ENCODE measurements at regions of chr14 and their contacts with region 1.

Region 1: GRCh38 chr14:76647697-76648298 is 113.5 kb upstream of the VASH1 start:
- DNase-seq: no peak
- ATAC-seq: peak; percentile 60

Region 2: DNA sequence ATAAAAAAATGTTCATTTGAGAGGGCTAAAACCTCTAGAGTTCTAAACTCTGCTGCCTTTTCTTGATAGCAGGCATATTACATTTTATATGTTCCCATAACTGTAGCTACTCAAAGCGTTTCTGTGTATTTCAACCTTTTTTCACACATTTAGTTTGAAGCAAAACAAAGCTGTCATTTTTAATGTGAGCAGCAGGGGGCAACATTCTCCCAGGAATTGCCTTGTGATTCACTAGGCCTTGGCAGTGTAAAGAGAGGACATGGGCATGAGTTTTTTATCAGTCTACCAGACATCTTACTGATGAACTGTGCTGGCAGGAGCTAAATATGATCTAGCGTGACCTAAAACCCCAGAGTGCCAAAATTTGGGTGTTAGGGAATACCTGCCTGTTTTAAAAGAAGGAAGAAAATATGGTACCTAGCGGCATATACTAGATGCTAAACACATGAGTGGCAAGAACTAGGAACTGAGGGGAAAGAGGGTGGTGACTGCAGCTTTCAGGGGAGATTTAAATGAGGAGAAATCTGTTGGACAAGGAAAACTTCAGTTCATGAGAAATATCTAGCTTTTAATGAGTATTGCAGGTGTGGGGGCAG is 596.9 kb before region 1 on chr14:
- intact Hi-C with region 1: loop called in 1 of 2 experiments (anchors 5 kb)
- DNase-seq: peak in 1 of 2 donors; percentile 33
- ATAC-seq: peak; percentile 56

Region 3: DNA sequence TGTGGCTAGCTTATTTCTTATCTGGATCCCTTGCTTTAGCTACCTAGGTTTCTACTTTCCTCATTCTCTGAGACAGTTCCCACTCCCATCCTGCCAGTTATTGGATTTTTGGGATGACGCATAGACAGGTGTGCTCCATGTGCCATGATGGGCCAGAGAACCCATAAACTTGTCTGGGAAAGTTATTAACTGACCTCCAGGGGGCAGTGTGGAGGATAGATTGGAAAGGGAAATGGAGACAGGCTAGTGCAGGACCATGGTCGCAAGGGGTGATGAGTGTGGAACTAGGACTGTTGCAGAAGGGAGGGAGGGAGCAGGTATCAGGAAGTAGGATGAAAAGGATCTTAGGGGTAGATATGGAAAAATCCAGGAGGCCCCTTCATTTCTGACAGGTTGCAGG is 191.6 kb before region 1 on chr14:
- intact Hi-C with region 1: loop called in 1 of 2 experiments (anchors 5 kb)
- DNase-seq: peak in 1 of 2 donors; percentile 8
- ATAC-seq: no peak